Aorta (tissue), 5 donors: ENCODE measurements at regions of chr11 and their contacts with region 1.

Region 1: DNA sequence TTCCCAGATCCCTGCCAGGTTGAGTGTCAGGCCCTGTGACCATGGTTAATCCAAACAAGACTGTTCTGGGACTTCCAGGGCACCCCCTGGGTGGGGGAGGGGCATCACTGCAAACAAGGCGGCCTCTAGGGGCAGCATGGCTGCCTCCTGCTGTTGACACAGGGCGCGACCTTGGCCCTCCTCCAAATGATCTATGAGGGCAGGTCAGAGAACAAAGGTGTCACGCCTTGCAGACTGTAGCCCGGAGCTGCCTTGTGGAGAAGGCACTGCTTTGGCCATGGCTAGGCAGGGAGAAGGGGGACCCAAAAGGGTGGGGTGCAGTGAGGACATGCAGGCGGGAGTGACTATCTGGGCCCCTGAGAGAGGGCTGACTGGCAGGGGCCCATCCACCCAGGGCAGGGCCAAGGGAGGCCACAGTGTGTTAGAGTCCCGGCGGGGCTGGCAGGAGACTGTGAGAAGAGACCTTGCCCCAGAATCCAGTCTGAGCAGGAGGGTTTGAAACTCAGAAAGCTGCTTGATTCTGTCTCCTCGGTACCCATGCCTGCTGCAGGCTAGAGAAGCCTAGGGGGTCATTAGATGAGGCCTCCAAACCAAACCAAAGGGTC is 35.6 kb downstream of the KCNC1 start:
- DNase-seq: peak in 1 of 2 donors; percentile 64
- ATAC-seq: no peak
- H3K4me3 ChIP-seq: no peak overlapping the region
- H3K27ac ChIP-seq: no peak overlapping the region
- H3K4me1 ChIP-seq: no peaks in the 10 kb centered on the region
- H3K27me3 ChIP-seq: no peaks in the 10 kb centered on the region

Region 2: DNA sequence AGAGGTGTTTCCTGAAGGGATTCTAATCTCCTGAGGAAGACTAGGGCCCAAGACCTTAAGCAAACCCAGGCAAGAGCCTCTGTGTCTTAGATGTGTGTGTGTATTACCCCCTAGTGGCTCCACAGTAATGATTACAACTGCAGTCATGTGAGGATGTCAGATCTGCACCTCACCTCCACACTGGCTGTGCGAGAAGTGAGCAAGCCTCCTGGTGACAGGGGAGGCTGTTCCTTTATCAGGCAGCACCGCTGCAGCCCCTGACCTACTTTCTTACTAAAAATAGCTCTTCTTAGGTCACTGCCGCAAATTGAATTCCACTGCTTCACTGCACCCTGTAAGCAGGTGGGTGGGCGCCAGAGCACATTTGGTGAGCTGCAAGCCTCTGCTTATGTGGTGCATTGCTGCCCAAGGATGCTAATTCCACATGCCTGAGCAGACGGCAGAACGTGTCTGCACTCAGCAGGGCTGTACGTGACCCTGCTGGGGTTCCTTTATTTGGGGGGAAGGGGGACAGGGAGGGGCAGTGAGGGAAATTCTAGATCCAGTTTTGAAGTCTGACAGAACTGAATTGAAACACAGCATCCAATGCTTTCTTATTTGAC is 76.8 kb after region 1 on chr11:
- intact Hi-C with region 1: loop called in 1 of 2 experiments (anchors 10 kb)
- DNase-seq: no peak
- ATAC-seq: no peak
- H3K4me3 ChIP-seq: no peak overlapping the region
- H3K27ac ChIP-seq: no peak overlapping the region
- H3K4me1 ChIP-seq: no peaks in the 10 kb centered on the region
- H3K27me3 ChIP-seq: no peaks in the 10 kb centered on the region